WTC11 (cell line): ENCODE measurements at regions of chr6 and their contacts with region 1.

Region 1: DNA sequence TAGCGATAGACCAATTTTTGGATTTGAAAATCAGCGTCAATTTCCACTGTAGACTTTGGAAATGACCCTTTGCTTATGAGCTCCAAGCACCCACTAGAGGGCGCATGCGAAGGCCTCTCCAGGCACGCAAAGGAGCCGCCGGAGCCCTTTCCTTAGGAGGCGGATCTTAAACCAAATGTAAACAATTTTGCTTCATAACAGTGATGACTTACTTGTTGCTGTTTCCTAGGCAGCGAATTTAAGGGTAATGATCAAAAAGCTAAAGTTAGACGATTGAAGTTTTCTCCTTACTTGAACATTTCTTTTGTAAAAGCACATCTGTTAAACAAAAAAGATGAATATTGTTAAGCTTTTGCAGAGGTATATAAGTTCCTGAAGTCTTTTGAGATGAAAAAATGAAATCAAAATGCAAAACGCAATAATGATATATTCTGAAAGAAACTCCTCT is 29.2 kb upstream of the EXOC2 start:
- DNase-seq: peak; percentile 81
- ATAC-seq: peak; percentile 86
- H3K4me3 Mint-ChIP-seq: no peak overlapping the region
- H3K27ac Mint-ChIP-seq: no peak overlapping the region
- H3K4me1 Mint-ChIP-seq: peaks cover 11% of the 10 kb centered on the region
- H3K27me3 Mint-ChIP-seq: no peaks in the 10 kb centered on the region
- CTCF ChIP-seq: peak; percentile 78

Region 2: DNA sequence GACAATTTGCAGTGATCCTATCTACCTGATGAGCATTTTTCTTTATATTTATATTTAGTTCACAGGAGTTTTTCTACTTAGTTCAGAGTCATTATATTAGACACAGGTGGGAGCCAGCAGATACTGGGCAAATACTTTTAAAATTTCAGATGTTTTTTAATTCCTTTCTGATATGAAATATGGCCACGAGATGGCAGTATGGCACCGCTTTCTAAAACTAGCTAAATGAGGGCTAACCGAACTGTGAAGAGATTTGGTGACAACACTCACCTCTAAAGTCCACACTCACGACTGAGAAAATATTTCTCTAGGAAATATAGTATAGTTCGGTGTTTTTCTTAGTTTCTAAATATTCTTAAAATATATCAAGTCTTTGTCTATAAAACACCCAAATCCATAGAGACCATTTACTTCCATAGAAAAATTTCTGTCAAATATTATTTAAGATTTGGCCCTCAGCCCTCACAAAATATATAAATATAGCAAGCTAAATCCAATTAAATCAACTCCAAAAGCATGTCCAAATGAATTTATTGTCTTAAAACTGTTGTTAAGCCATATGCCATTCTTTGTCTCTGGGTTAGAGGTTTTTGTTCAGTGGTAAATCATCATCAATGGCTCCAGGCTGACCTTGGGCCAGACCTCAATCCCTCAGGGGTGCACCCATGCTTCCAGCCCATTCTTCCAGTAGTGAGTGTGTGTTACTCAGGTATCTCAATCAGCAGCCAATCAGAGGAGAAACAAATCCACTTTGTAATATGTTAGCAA is 128.8 kb before region 1 on chr6:
- CTCF ChIA-PET with region 1: interaction called, 24 read pairs
- POLR2A ChIA-PET with region 1: no interaction called
- DNase-seq: peak; percentile 33
- ATAC-seq: peak; percentile 68
- H3K4me3 Mint-ChIP-seq: no peak overlapping the region
- H3K27ac Mint-ChIP-seq: peak overlapping the region; percentile 45
- H3K4me1 Mint-ChIP-seq: peaks cover 21% of the 10 kb centered on the region
- H3K27me3 Mint-ChIP-seq: no peaks in the 10 kb centered on the region
- CTCF ChIP-seq: peak; percentile 52

Region 3: DNA sequence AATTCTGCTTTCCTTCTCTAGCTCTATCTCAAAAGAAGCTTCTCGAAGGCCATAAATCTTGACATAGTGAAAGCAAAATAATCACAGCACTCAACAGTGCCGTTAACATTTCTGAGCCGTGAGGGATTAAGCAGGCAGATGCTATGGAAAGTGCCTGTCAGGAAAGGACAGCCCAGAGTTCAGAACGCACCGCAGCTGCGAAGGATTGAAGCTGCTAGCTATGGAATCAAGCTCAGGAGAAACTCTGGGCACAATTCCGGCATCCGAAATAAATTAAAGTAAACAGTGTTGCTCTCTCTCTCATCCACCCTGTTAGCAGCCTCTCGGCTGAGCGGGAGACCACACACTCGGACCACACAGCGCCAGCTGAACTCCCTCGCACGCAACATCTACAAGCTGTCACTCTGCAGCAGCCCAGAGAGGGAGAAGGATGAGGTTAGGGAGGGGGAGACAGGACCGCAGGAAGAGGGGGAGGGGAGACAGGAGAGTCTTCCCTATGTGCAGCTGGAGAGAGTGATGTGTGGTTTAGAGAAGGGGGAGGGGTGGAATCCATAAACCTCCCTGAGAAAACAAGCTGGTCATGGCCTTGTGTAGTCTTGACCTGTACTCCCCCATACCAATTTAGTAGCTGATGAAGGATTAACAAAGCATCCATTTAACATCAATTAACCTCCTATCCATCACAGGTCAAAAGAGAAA is 38.2 kb before region 1 on chr6:
- CTCF ChIA-PET with region 1: interaction called, 10 read pairs
- POLR2A ChIA-PET with region 1: no interaction called
- DNase-seq: peak; percentile 76
- ATAC-seq: peak; percentile 86
- H3K4me3 Mint-ChIP-seq: peak overlapping the region; percentile 67
- H3K27ac Mint-ChIP-seq: peak overlapping the region; percentile 95
- H3K4me1 Mint-ChIP-seq: peaks cover 60% of the 10 kb centered on the region
- H3K27me3 Mint-ChIP-seq: no peaks in the 10 kb centered on the region
- CTCF ChIP-seq: no peak

Region 4: GRCh38 chr6:701700-702479 is 20.2 kb before region 1 on chr6:
- CTCF ChIA-PET with region 1: interaction called, 25 read pairs
- POLR2A ChIA-PET with region 1: no interaction called
- DNase-seq: peak; percentile 30
- ATAC-seq: peak; percentile 73
- H3K4me3 Mint-ChIP-seq: no peak overlapping the region
- H3K27ac Mint-ChIP-seq: peak overlapping the region; percentile 73; the same call in 1 of the 2 replicates
- H3K4me1 Mint-ChIP-seq: peaks cover 41% of the 10 kb centered on the region
- H3K27me3 Mint-ChIP-seq: no peaks in the 10 kb centered on the region
- CTCF ChIP-seq: no peak

Region 5: GRCh38 chr6:733431-734219 is 11.5 kb after region 1 on chr6:
- CTCF ChIA-PET with region 1: interaction called, 28 read pairs
- POLR2A ChIA-PET with region 1: no interaction called
- DNase-seq: no peak
- ATAC-seq: no peak
- H3K4me3 Mint-ChIP-seq: no peak overlapping the region
- H3K27ac Mint-ChIP-seq: no peak overlapping the region
- H3K4me1 Mint-ChIP-seq: peaks cover 19% of the 10 kb centered on the region
- H3K27me3 Mint-ChIP-seq: no peaks in the 10 kb centered on the region; the same call in 1 of the 2 replicates
- CTCF ChIP-seq: no peak